ENCODE measurements at regions of chr13 and their contacts with region 1.

Region 1: GRCh38 chr13:49342454-49342853 is 94.7 kb downstream of the CDADC1 start:
- DNase-seq: no peak
- CTCF ChIP-seq: no peak

Region 2: DNA sequence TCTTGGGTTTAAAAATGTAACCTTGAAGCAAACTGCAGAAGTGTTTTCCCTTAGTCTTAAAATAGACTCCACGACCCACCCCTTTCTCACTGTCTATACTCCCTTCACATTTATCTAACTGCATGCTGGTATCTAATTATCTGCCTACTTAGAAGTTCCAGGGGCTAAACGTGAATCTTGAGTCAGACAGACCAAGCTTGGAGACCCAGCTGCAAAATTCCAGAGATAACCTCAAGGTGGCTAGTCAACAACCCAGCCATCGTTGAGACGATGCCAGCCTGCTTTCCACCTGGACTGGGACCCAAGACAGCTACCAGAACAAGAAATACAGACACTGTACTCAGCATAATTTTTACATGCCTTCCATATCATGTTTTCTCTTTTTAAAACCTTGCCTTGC is 12.6 kb before region 1 on chr13:
- CTCF ChIA-PET with region 1: interaction called, 11 read pairs
- POLR2A ChIA-PET with region 1: no interaction called
- DNase-seq: no peak
- CTCF ChIP-seq: no peak

Region 3: GRCh38 chr13:49560270-49561050 is 218.0 kb after region 1 on chr13:
- CTCF ChIA-PET with region 1: no interaction called
- POLR2A ChIA-PET with region 1: no interaction called
- DNase-seq: no peak
- CTCF ChIP-seq: no peak

Measured in GM10248 (cell line).